PC-9 (cell line): ENCODE measurements at regions of chr2 and their contacts with region 1.

Region 1: GRCh38 chr2:39948016-39948719 is 169.1 kb upstream of the THUMPD2 start:
- DNase-seq: peak in 1 of 2 experiments; percentile 26
- H3K4me3 ChIP-seq: no peak overlapping the region
- H3K27ac ChIP-seq: no peak overlapping the region
- H3K4me1 ChIP-seq: no peaks in the 10 kb centered on the region
- H3K27me3 ChIP-seq: no peaks in the 10 kb centered on the region
- CTCF ChIP-seq: no peak

Region 2: DNA sequence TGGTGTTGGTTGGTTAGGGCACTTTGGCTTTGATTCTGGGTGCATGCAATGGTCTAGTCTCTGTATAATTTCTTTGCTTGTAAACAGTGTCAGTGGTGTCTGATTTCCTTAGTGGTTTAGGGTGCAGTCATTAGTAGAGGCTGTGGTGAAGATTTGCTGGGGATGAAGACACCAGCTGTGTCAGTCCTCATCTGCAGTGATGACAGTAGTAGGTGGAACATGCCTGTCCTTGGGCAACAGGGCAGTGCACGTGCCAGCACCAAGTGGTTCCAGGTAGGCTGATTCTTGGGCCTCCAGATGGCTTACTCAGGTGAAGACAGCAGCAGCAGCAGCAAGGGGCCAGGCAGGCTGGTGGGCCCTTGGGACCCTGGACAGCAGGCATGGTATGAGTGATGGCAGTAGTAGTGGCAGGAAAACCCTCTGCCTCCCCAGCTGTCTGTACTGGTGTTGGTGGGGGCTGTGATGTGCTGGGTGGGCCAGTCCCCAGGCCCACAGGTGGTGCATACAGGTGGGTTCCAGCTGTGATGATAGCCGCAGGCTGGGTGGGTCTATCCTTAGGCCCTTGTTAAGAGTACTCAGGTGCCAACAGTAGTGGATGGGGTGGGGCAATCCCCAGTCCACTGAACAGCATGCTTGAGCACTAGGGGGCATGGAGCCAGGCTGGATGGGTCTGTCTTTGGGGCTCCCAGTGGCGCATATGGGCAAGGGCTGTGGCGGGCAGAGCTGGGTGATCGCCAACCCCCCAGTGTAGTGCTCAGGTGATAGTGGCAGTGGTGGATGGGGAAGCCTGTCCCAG is 28.5 kb before region 1 on chr2:
- CTCF ChIA-PET with region 1: no interaction called
- POLR2A ChIA-PET with region 1: no interaction called
- intact Hi-C with region 1: no loop called
- DNase-seq: no peak
- H3K4me3 ChIP-seq: no peak overlapping the region
- H3K27ac ChIP-seq: no peak overlapping the region
- H3K4me1 ChIP-seq: no peaks in the 10 kb centered on the region
- H3K27me3 ChIP-seq: no peaks in the 10 kb centered on the region
- CTCF ChIP-seq: no peak

Region 3: DNA sequence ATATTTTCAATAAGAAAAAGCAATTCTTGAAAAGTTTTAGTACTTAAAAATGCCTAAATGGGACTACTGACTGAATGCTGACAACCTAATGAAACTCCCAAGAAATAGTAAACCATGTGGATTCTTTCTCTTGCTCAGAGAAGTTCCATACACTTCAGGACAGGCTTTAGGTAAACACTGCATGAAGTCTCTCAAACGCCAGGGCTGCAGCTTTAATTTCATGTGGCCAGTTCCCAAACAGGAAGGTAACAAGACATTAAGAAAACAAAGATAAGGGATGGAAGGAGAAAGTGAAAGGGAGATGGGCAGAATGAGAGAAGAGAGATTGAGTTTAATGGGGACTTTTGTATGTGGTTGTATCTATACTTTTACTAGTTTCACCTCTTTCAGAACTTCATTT is 1364.9 kb after region 1 on chr2:
- CTCF ChIA-PET with region 1: interaction called, 14 read pairs
- POLR2A ChIA-PET with region 1: no interaction called
- intact Hi-C with region 1: no loop called
- DNase-seq: no peak
- H3K4me3 ChIP-seq: no peak overlapping the region
- H3K27ac ChIP-seq: no peak overlapping the region
- H3K4me1 ChIP-seq: no peaks in the 10 kb centered on the region
- H3K27me3 ChIP-seq: no peaks in the 10 kb centered on the region
- CTCF ChIP-seq: no peak